Heart right ventricle (tissue), 16 donors: ENCODE measurements at regions of chr3 and their contacts with region 1.

Region 1: GRCh38 chr3:15820911-15821310 is 23.1 kb upstream of the ANKRD28 start:
- DNase-seq: no peak
- ATAC-seq: no peak
- H3K4me3 ChIP-seq: no peak overlapping the region
- H3K27ac ChIP-seq: no peak overlapping the region
- H3K4me1 ChIP-seq: peaks cover 0 to 29% (median 13%) of the 10 kb centered on the region in 9 donors
- H3K27me3 ChIP-seq: no peaks in the 10 kb centered on the region
- CTCF ChIP-seq: peak in 1 of 9 donors; percentile 14

Region 2: DNA sequence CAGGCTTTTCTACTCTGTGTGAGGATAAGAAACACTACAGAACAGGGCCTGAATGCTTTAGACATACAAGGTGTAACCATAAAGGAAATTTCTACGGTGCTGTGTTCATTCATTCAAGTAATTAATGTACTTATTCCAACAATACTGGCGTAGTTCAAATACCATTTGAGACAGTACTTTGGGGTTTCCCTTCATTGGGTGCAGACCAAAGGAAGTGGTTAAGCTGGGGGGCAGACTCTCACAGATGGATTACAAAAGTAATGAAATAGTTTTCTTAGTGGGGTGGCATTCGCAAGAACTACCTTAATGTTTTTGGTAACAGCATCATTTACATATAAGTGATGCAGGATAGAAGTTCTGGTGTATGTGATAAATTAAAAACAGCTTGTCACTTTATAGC is 153.4 kb before region 1 on chr3:
- intact Hi-C with region 1: no loop called
- DNase-seq: no peak
- ATAC-seq: no peak
- H3K4me3 ChIP-seq: no peak overlapping the region
- H3K27ac ChIP-seq: no peak overlapping the region
- H3K4me1 ChIP-seq: peaks cover 0 to 7% (median 0%) of the 10 kb centered on the region in 9 donors
- H3K27me3 ChIP-seq: no peaks in the 10 kb centered on the region
- CTCF ChIP-seq: no peak

Region 3: DNA sequence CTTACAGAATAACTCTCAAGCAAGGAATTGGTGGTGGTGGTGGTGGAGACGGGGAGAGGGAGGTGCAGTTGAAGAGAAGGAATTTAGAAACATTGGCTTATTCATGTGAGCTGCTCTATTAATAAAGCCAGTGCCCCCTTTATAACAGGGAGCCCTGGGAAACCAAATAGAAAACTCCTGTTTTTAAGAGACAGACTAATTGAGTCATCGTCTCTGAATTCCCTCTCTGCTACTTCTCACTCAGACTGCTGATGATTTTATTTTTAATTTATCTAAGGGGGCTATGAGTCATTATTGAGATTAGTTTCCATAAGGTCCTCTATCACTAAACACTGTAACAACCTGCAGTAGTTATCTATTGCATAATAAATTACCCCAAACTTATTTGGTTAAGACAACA is 207.7 kb after region 1 on chr3:
- intact Hi-C with region 1: loop called in 1 of 10 experiments (anchors 10 kb)
- DNase-seq: no peak
- ATAC-seq: no peak
- H3K4me3 ChIP-seq: no peak overlapping the region
- H3K27ac ChIP-seq: no peak overlapping the region
- H3K4me1 ChIP-seq: no peaks in the 10 kb centered on the region
- H3K27me3 ChIP-seq: no peaks in the 10 kb centered on the region
- CTCF ChIP-seq: no peak

Region 4: DNA sequence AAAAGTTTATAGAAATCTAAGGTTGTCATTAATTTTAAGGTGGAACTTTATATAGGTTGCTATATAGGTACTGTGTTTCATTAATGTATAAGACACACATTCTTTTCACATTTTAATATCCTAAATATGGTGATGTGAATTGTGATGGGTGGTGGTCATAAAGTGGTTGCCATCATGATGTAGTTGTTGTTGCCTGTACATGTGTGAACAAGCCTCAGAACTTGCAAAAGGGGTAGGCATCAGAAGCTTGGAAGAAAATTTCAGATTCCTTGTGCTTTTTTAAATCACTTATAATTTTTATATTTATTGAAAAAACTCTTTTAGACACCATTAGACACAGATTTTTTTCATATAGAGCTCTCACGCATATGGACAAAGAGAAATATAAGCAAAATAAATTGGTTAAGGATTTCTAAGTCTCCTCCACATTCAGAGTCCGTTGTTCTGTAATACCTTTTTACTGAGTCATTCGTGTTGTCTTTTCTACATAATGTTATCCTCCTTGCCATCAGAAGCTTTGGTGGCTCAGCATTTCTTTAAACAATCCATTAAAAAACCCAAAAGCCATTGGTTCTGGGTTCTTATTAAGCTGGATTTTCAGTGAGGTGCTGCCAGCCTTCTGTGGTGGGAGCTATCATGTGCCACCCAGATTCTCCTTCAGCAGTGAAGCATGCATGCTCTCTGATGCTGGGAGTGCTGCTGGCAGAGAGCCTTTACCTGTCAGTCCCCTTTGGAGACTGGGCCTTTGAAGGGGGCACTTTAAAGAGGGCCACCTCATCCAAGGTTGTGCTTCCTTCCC is 213.2 kb after region 1 on chr3:
- intact Hi-C with region 1: loop called in 2 of 10 experiments (anchors 5 to 10 kb)
- DNase-seq: no peak
- ATAC-seq: no peak
- H3K4me3 ChIP-seq: no peak overlapping the region
- H3K27ac ChIP-seq: no peak overlapping the region
- H3K4me1 ChIP-seq: no peaks in the 10 kb centered on the region
- H3K27me3 ChIP-seq: no peaks in the 10 kb centered on the region
- CTCF ChIP-seq: no peak

Region 5: GRCh38 chr3:16048435-16049318 is 227.8 kb after region 1 on chr3:
- intact Hi-C with region 1: loop called in 8 of 10 experiments (anchors 5 to 10 kb)
- DNase-seq: peak in 1 of 2 donors; percentile 68
- ATAC-seq: peak; percentile 75 to 89 (median 85)
- H3K4me3 ChIP-seq: peak overlapping the region in 2 of 10 donors; percentile 9 to 33
- H3K27ac ChIP-seq: peak overlapping the region in 1 of 10 donors; percentile 15
- H3K4me1 ChIP-seq: peaks cover 0 to 39% (median 15%) of the 10 kb centered on the region in 9 donors
- H3K27me3 ChIP-seq: no peaks in the 10 kb centered on the region
- CTCF ChIP-seq: peak; percentile 78 to 92 (median 83)

Region 6: GRCh38 chr3:16183601-16184270 is 362.8 kb after region 1 on chr3:
- intact Hi-C with region 1: loop called in 9 of 10 experiments (anchors 2 to 10 kb)
- DNase-seq: no peak
- ATAC-seq: peak in 7 of 8 donors; percentile 29 to 68 (median 60)
- H3K4me3 ChIP-seq: no peak overlapping the region
- H3K27ac ChIP-seq: no peak overlapping the region
- H3K4me1 ChIP-seq: peaks cover 0 to 17% (median 1%) of the 10 kb centered on the region in 9 donors
- H3K27me3 ChIP-seq: no peaks in the 10 kb centered on the region
- CTCF ChIP-seq: no peak

Region 7: DNA sequence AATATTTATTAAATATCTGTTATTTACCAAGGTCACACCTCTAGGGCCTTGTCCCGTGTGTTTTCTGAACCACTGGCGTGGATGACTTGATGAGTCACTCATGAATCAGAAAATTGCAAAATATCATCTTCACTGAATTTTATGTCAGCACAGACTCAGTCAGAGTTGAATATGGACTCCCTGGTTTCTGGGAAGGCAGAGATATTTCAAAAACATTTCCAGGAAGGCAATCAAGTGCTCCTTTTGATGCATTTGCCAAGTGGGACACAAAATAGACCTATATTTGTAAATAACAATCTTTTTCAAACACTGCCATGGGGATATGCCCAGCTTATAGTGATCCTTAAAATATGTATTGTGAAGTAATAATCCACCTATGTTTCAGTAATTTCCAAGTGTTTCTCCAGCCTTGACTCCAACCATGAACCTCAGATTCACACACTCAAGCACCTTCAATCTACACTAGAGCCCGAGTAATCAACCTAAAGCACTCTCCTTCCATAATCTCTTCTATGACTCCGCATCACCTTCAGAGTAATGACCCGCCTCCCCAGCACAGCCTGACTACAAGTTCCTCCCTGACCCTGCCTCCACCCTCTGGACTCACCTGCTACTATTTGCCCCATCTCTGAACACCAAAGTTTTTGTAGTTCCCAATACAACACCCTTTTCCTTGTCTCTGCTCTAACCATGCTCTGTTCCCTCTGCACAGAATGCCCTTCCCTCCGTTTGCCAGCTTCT is 419.5 kb after region 1 on chr3:
- intact Hi-C with region 1: loop called in 5 of 10 experiments (anchors 2 to 5 kb)
- DNase-seq: no peak
- ATAC-seq: no peak
- H3K4me3 ChIP-seq: no peak overlapping the region
- H3K27ac ChIP-seq: peak overlapping the region in 1 of 10 donors; percentile 49
- H3K4me1 ChIP-seq: peaks cover 0 to 53% (median 35%) of the 10 kb centered on the region in 9 donors
- H3K27me3 ChIP-seq: no peaks in the 10 kb centered on the region
- CTCF ChIP-seq: no peak

Region 8: DNA sequence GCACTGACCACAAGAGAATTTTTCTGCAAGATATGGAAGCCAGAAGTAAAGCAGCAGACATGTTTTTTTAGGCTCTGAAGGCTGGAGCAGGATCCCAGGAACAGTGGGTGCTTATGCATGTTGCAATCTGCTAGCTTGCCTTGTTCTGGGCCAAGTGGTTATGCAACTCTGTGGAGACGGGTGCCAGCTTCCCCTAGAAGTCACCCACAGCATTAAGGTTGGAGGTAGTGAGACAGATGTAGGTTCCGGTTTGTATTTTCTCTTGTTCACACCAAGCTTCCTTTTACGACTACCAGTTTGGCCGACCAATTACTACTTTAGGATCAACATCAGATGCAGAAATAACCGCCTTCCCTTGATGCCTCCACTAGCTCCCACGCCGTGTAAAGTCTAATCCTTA is 432.7 kb after region 1 on chr3:
- intact Hi-C with region 1: loop called in 4 of 10 experiments (anchors 5 kb)
- DNase-seq: peak; percentile 36 to 44
- ATAC-seq: peak; percentile 62 to 94 (median 84)
- H3K4me3 ChIP-seq: no peak overlapping the region
- H3K27ac ChIP-seq: peak overlapping the region in 2 of 10 donors; percentile 2 to 24
- H3K4me1 ChIP-seq: peaks cover 0 to 21% (median 4%) of the 10 kb centered on the region in 9 donors
- H3K27me3 ChIP-seq: no peaks in the 10 kb centered on the region
- CTCF ChIP-seq: no peak